ENCODE measurements at regions of chrX and their contacts with region 1.

Region 1: GRCh38 chrX:130268500-130269170 is at the start of gene ZNF280C:
- DNase-seq: peak; percentile 70
- ATAC-seq: peak; percentile 94
- H3K4me3 ChIP-seq: peak within 1 kb of the TSS; percentile 66
- H3K27ac ChIP-seq: peak within 1 kb of the TSS; percentile 75
- H3K4me1 ChIP-seq: no peaks in the 10 kb centered on the region
- H3K27me3 ChIP-seq: no peaks in the 10 kb centered on the region
- CTCF ChIP-seq: peak; percentile 31 to 33 (median 33); a peak in 4 of 6 replicates
- EP300 ChIP-seq: no peak
- POLR2A ChIP-seq: peak; percentile 96
- RAD21 ChIP-seq: no peak
- polyA plus RNA-seq, gene ZNF280C: 0.82 to 1.8 TPM

Region 2: DNA sequence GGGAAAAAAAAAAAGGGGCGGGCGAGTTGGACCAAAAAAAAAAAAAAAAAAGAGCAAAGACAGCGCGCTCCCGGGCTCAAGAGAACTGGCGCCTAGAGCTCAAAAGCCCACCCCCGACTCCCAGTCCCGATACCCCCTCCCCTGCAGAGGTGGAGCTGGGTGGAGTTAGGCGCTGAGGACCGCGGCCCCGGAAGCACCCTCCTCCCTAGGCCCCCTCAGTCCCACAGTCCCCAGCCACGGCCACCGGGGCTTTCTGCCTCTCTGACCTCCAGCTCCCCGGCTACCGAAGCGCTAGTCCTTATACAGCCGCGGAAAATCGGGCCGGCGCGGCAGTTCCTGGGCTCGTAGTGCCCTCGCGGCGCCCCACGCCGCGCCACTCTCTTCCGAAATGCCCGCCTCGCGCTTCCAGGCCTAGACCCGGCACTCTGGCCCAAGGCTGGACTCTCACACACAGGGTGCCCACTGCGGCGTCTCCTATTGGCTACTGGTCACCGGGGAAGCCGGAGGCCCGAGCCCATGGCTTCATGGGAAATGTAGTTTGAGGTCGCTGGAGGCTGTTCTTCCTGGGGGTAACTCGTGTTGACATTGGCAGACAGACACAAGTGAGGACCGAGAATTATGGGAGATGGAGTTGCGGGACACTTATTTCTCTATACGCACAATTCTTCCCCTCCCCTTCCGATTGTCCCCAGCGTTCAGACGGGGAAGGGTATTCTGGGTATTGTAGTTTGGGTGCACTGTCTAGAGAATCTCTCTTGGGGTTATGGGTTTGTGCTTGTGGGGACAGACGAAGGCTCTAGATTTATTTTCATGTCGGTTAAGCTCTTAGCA is 634.4 kb after region 1 on chrX and contains the start of gene ENOX2:
- CTCF ChIA-PET with region 1: no interaction called
- POLR2A ChIA-PET with region 1: no interaction called
- RAD21 ChIA-PET with region 1: no interaction called
- SMC1A ChIA-PET with region 1: no interaction called
- in situ Hi-C with region 1: no loop called
- intact Hi-C with region 1: loop called (anchors 5 kb)
- DNase-seq: peak; percentile 89
- ATAC-seq: peak; percentile 98
- H3K4me3 ChIP-seq: peak within 1 kb of the TSS; percentile 68
- H3K27ac ChIP-seq: peak within 1 kb of the TSS; percentile 71
- H3K4me1 ChIP-seq: no peaks in the 10 kb centered on the region
- H3K27me3 ChIP-seq: no peaks in the 10 kb centered on the region
- CTCF ChIP-seq: no peak
- EP300 ChIP-seq: no peak
- POLR2A ChIP-seq: peak; percentile 72
- RAD21 ChIP-seq: no peak
- polyA plus RNA-seq, gene ENOX2: 3.2 to 4.5 TPM

Measured in GM12878 (cell line).